CD8-positive, alpha-beta memory T cell (primary cell): ENCODE measurements at regions of chr2 and their contacts with region 1.

Region 1: GRCh38 chr2:231514103-231514950 is 15.9 kb downstream of the NMUR1 start:
- DNase-seq: peak; percentile 96 to 99 (median 98)
- H3K4me3 ChIP-seq: peak overlapping the region; percentile 80
- H3K4me3 Mint-ChIP-seq: peak overlapping the region; percentile 77 to 95 (median 89)
- H3K27ac ChIP-seq: peak overlapping the region; percentile 81
- H3K27ac Mint-ChIP-seq: peak overlapping the region; percentile 84 to 98 (median 96)
- H3K4me1 ChIP-seq: peaks cover 19% of the 10 kb centered on the region
- H3K4me1 Mint-ChIP-seq: peaks cover 16 to 24% (median 24%) of the 10 kb centered on the region in 3 donors
- H3K27me3 ChIP-seq: no peaks in the 10 kb centered on the region
- H3K27me3 Mint-ChIP-seq: peaks cover 0 to 3% of the 10 kb centered on the region in 2 donors

Region 2: GRCh38 chr2:231181860-231182512 is 332.3 kb before region 1 on chr2:
- CTCF ChIA-PET with region 1: no interaction called
- POLR2A ChIA-PET with region 1: no interaction called
- DNase-seq: no peak
- H3K4me3 ChIP-seq: no peak overlapping the region
- H3K4me3 Mint-ChIP-seq: no peak overlapping the region
- H3K27ac ChIP-seq: no peak overlapping the region
- H3K27ac Mint-ChIP-seq: peak overlapping the region in 1 of 8 donors; percentile 65
- H3K4me1 ChIP-seq: no peaks in the 10 kb centered on the region
- H3K4me1 Mint-ChIP-seq: peaks cover 11 to 15% (median 13%) of the 10 kb centered on the region in 3 donors
- H3K27me3 ChIP-seq: no peaks in the 10 kb centered on the region
- H3K27me3 Mint-ChIP-seq: peaks cover 0 to 2% of the 10 kb centered on the region in 2 donors

Region 3: DNA sequence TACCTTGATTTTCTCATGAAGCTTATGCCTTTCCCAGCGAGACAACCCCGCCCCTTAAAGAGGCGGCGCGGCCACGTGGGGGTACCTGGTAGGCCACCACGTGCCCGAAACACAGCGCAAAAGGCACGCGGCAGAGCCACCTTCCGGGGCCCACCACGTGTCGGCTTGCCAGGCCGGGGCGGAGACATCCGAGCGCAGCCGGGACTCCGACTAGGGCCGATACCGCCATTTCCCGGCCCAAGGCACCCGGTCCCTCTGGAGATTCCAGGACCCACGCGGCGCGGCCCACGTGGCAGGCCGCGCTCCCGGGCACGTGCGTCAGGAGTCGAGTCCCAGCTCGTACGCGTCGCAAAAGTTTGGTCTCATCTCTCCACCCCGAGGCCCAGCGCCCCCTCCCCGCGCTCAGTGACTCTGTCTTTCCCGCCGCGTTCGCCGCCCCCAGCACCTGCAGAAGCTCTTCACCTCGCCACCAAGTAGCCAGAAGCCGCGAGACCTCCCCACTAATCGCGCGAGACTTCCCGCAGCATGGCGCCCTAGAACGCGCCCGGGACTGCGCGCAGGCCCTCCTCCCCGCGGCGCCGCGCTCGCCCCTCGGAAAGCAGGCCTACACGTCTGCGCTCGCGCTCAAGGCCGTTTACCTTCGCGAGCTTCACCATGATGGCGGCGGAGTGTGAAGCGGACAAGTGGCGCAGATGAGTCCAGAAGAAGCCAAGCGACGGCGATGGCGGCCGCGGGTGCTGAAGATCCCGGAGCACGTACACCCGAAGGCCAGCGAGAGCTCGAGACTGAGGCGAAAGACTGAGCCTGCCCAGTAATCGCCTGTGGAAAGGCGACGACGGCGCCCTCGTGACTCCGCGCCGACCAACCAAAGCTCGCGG is 50.4 kb before region 1 on chr2 and contains the start of gene NCL:
- CTCF ChIA-PET with region 1: interaction called, 8 read pairs
- POLR2A ChIA-PET with region 1: interaction called, 28 read pairs
- DNase-seq: peak; percentile 79 to 93 (median 88)
- H3K4me3 ChIP-seq: peak within 1 kb of the TSS; percentile 88
- H3K4me3 Mint-ChIP-seq: peak within 1 kb of the TSS; percentile 94 to 100 (median 96)
- H3K27ac ChIP-seq: peak within 1 kb of the TSS; percentile 98
- H3K27ac Mint-ChIP-seq: peak within 1 kb of the TSS; percentile 98 to 100 (median 100)
- H3K4me1 ChIP-seq: peaks cover 42% of the 10 kb centered on the region
- H3K4me1 Mint-ChIP-seq: peaks cover 47 to 55% (median 54%) of the 10 kb centered on the region in 3 donors
- H3K27me3 ChIP-seq: no peaks in the 10 kb centered on the region
- H3K27me3 Mint-ChIP-seq: peaks cover 0 to 13% of the 10 kb centered on the region in 2 donors
- total RNA-seq, gene NCL: 1,673 to 1,772 TPM

Region 4: DNA sequence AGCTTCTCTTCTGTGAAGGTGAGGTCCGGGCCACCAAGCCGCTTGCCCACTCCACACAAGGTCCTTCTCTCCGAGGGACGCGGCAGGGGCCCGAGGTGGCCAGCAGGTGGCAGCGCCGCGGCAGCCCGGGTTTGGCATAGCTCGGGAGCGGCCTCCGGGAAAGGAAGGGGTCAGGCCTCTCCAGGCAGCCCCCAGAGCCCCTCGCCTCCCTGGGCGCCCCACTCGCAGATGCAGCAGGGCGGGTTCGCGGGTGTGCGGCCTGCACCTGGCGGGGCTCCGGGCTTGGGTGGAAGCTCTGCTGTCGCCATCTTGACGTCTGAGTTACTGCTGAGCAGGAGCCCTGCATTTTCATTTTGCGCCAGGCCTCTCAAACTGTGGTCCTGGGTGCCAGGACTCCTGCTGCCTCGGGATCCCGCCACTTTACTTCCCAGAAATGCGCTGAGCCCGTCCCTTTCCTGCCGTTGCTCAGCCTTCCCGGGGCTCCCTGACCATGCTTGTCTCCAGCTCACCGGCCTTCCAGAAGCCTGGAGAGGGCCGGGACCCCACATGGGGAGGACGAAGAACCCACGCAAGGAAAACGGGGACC is 31.4 kb before region 1 on chr2:
- CTCF ChIA-PET with region 1: interaction called, 32 read pairs
- POLR2A ChIA-PET with region 1: interaction called, 6 read pairs
- DNase-seq: peak; percentile 59 to 81 (median 64)
- H3K4me3 ChIP-seq: peak overlapping the region; percentile 64
- H3K4me3 Mint-ChIP-seq: peak overlapping the region; percentile 69 to 88 (median 78)
- H3K27ac ChIP-seq: peak overlapping the region; percentile 67
- H3K27ac Mint-ChIP-seq: peak overlapping the region; percentile 81 to 95 (median 90)
- H3K4me1 ChIP-seq: peaks cover 4% of the 10 kb centered on the region
- H3K4me1 Mint-ChIP-seq: peaks cover 4 to 18% (median 8%) of the 10 kb centered on the region in 3 donors
- H3K27me3 ChIP-seq: no peaks in the 10 kb centered on the region
- H3K27me3 Mint-ChIP-seq: peaks cover 0 to 2% of the 10 kb centered on the region in 2 donors

Region 5: GRCh38 chr2:231530091-231531011 is 16.0 kb after region 1 on chr2 and contains the start of gene NMUR1:
- CTCF ChIA-PET with region 1: interaction called, 12 read pairs
- POLR2A ChIA-PET with region 1: no interaction called
- DNase-seq: peak; percentile 64 to 77 (median 76)
- H3K4me3 ChIP-seq: peak within 1 kb of the TSS; percentile 12
- H3K4me3 Mint-ChIP-seq: peak within 1 kb of the TSS; percentile 50 to 89 (median 70)
- H3K27ac ChIP-seq: peak within 1 kb of the TSS; percentile 16
- H3K27ac Mint-ChIP-seq: peak within 1 kb of the TSS; percentile 56 to 90 (median 73)
- H3K4me1 ChIP-seq: peaks cover 27% of the 10 kb centered on the region
- H3K4me1 Mint-ChIP-seq: peaks cover 46 to 75% (median 51%) of the 10 kb centered on the region in 3 donors
- H3K27me3 ChIP-seq: no peaks in the 10 kb centered on the region
- H3K27me3 Mint-ChIP-seq: peaks cover 0 to 3% of the 10 kb centered on the region in 2 donors
- total RNA-seq, gene NMUR1: 0.15 to 0.18 TPM

Region 6: DNA sequence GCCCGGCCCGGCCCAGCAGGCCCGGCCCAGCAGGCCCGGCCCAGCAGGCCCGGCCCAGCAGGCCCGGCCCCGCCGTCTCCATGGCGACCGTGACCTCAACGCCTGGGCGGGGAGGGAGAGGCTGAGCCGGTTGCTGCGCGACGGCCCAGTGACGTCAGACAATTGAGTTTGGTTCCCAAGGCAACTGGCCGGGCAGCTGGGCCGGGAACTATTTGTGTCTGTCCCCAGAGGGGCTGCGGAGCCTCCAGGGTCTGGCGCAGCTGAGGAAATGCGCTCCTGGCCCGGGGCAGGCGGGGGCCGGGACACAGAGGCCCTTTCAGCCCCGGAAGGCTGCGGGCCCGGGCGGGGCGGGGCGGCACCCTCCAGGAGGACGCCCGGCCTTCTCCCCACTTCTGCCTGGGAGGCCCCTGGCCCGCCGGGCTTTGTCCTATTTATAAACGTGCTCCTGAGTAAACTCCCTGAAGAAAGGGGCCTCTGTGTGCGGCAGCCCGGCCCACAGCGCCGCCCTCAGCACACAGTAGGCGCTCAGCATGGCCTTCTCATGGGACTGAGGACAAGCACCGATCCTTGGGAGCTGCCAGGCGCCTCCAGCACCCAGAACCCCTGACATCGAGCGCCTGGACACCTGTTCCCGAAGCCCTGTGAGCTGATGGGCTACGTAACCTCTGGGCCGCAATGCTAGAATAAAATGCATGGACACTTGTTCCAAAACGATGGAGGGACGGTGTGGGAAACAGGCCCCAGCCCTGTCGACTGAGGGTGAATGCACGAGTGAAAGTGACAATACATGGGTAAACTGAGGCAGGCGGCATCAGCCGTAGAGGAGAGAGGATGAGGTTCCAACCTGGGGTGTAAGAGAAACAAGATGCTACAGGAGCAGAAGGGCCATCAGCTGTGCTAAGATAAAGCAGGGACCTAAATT is 90.6 kb after region 1 on chr2:
- CTCF ChIA-PET with region 1: interaction called, 20 read pairs
- POLR2A ChIA-PET with region 1: no interaction called
- DNase-seq: peak; percentile 91 to 99 (median 97)
- H3K4me3 ChIP-seq: peak overlapping the region; percentile 49
- H3K4me3 Mint-ChIP-seq: peak overlapping the region; percentile 60 to 87 (median 74)
- H3K27ac ChIP-seq: peak overlapping the region; percentile 87
- H3K27ac Mint-ChIP-seq: peak overlapping the region; percentile 71 to 97 (median 94)
- H3K4me1 ChIP-seq: peaks cover 8% of the 10 kb centered on the region
- H3K4me1 Mint-ChIP-seq: peaks cover 5 to 15% (median 11%) of the 10 kb centered on the region in 3 donors
- H3K27me3 ChIP-seq: no peaks in the 10 kb centered on the region
- H3K27me3 Mint-ChIP-seq: peaks cover 0 to 1% of the 10 kb centered on the region in 2 donors

Region 7: GRCh38 chr2:231786177-231786916 is 272.0 kb after region 1 on chr2 and contains the start of gene COPS7B:
- CTCF ChIA-PET with region 1: no interaction called
- POLR2A ChIA-PET with region 1: no interaction called
- DNase-seq: peak; percentile 68 to 81 (median 69)
- H3K4me3 ChIP-seq: peak within 1 kb of the TSS; percentile 83
- H3K4me3 Mint-ChIP-seq: peak within 1 kb of the TSS; percentile 90 to 99 (median 93)
- H3K27ac ChIP-seq: peak within 1 kb of the TSS; percentile 41
- H3K27ac Mint-ChIP-seq: peak within 1 kb of the TSS; percentile 84 to 98 (median 91)
- H3K4me1 ChIP-seq: peaks cover 37% of the 10 kb centered on the region
- H3K4me1 Mint-ChIP-seq: peaks cover 64 to 88% (median 83%) of the 10 kb centered on the region in 3 donors
- H3K27me3 ChIP-seq: no peaks in the 10 kb centered on the region
- H3K27me3 Mint-ChIP-seq: no peaks in the 10 kb centered on the region
- total RNA-seq, gene COPS7B: 48.0 to 51.8 TPM